Breast epithelium (tissue), 4 donors: ENCODE measurements at regions of chr19 and their contacts with region 1.

Region 1: GRCh38 chr19:15680478-15681322 is 7.8 kb downstream of the CYP4F12 start:
- DNase-seq: no peak
- H3K4me3 ChIP-seq: no peak overlapping the region
- H3K27ac ChIP-seq: no peak overlapping the region
- H3K4me1 ChIP-seq: no peaks in the 10 kb centered on the region
- H3K27me3 ChIP-seq: no peaks in the 10 kb centered on the region
- CTCF ChIP-seq: no peak
- POLR2A ChIP-seq: no peak

Region 2: DNA sequence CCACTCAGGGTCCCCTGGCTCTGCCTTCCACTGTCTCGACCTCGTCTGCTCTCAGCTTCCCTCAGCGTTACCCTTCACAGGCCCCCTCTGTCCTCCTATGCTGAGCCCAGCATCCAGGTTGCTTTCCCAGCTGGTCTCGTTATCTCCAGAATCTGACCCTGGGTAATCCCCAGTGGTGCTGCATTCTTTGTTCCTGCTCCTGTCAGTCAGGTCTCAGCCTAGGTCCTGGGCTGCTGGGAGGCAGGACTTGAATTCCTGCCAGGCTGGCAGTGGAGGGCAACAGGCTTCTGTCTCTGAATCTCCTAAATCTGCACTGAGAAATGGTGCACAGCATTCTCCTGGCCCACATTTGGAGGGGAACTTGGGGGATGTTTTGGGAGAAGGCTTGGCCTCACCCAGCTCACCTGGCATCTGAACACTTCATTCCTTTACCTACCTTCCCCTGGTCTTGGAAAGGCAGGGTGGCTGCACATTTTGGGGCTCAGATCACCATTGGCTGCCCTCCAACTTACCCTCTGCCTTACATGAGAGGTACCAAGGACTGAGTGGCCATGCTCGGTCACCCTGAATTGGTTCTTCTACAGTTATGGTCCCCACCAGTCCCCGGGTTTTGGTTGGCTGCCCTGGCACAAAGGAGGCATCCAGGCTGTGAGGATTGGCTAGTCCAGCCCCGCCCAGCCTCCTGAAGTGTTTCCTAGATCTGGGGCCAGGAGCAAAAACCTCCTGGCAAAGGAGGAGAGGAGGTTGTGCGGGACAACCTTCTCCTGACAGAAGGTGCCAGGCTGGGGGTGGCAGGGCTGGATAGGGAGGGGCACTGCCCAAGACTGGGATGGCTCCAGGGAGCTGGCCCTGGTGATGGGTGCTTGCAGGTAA is 66.0 kb before region 1 on chr19 and contains the start of gene CYP4F8:
- intact Hi-C with region 1: loop called (anchors 2 kb)
- DNase-seq: peak in 1 of 2 donors; percentile 13
- H3K4me3 ChIP-seq: no peak within 1 kb of the TSS
- H3K27ac ChIP-seq: no peak within 1 kb of the TSS
- H3K4me1 ChIP-seq: no peaks in the 10 kb centered on the region
- H3K27me3 ChIP-seq: peaks cover 0 to 15% of the 10 kb centered on the region in 2 donors
- CTCF ChIP-seq: no peak
- POLR2A ChIP-seq: no peak
- total RNA-seq, gene CYP4F8: 2.6 to 5.0 TPM in 2 of 3 donors, not detected in the other

Region 3: GRCh38 chr19:15934332-15935174 is 253.9 kb after region 1 on chr19 and contains the start of gene CYP4F11:
- intact Hi-C with region 1: no loop called
- DNase-seq: peak; percentile 57 to 89
- H3K4me3 ChIP-seq: peak within 1 kb of the TSS in 1 of 3 donors; percentile 21
- H3K27ac ChIP-seq: peak within 1 kb of the TSS in 1 of 2 donors; percentile 84
- H3K4me1 ChIP-seq: no peaks in the 10 kb centered on the region
- H3K27me3 ChIP-seq: peaks cover 0 to 21% of the 10 kb centered on the region in 2 donors
- CTCF ChIP-seq: no peak
- POLR2A ChIP-seq: no peak
- total RNA-seq, gene CYP4F11: 0.16 to 8.8 (median 3.1) TPM

Region 4: GRCh38 chr19:16688084-16688483 is 1007.4 kb after region 1 on chr19:
- intact Hi-C with region 1: no loop called
- DNase-seq: no peak
- H3K4me3 ChIP-seq: no peak overlapping the region
- H3K27ac ChIP-seq: no peak overlapping the region
- H3K4me1 ChIP-seq: no peaks in the 10 kb centered on the region
- H3K27me3 ChIP-seq: no peaks in the 10 kb centered on the region
- CTCF ChIP-seq: no peak
- POLR2A ChIP-seq: no peak